ENCODE measurements at regions of chr13 and their contacts with region 1.

Region 1: GRCh38 chr13:27264181-27264580 is 6.4 kb upstream of the RASL11A start:
- DNase-seq: no peak
- H3K4me3 Mint-ChIP-seq: no peak overlapping the region
- H3K27ac Mint-ChIP-seq: no peak overlapping the region
- H3K4me1 Mint-ChIP-seq: peaks cover 24% of the 10 kb centered on the region
- H3K27me3 Mint-ChIP-seq: peaks cover 4% of the 10 kb centered on the region

Region 2: GRCh38 chr13:27353166-27353583 is 89.0 kb after region 1 on chr13:
- intact Hi-C with region 1: loop called (anchors 5 kb)
- DNase-seq: peak; percentile 31
- H3K4me3 Mint-ChIP-seq: no peak overlapping the region
- H3K27ac Mint-ChIP-seq: peak overlapping the region; percentile 3
- H3K4me1 Mint-ChIP-seq: peaks cover 10% of the 10 kb centered on the region
- H3K27me3 Mint-ChIP-seq: peaks cover 6% of the 10 kb centered on the region

Measured in activated T-helper 2 cell treated with anti-CD3 and anti-CD28 coated beads, Interferon-gamma antibody, Interleukin-2, Interleukin-4, amounts not matched to agents 10 μg/mL and 5 μg/mL and 100 μg/mL, durations not matched to agents 14 hours and 24 hours and 36 hours (primary cell).